ENCODE measurements at regions of chr12 and their contacts with region 1.

Region 1: DNA sequence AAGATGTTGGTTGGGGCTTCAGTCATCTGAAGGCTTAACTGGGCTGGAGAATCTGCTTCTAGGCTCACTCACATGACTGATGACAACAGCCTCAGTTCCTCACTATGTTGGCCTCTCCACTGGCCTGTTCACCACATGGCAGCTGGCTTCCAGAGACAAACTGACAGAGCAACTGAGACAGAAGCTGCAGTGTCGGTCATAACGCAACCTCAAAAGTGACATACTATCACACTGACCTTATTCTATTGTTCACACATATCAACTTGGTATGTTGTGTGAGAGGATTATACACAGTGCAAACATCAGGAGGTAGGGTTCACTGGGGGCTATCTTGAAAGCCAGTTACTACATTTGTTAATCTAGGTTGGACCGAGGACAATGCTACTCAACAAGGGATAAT is 92.9 kb downstream of the PAWR start:
- DNase-seq: no peak
- ATAC-seq: no peak; the same call in 1 of the 2 replicates
- H3K4me3 Mint-ChIP-seq: no peak overlapping the region
- H3K27ac Mint-ChIP-seq: peak overlapping the region; percentile 47
- H3K4me1 Mint-ChIP-seq: peaks cover 31% of the 10 kb centered on the region
- H3K27me3 Mint-ChIP-seq: no peaks in the 10 kb centered on the region
- CTCF ChIP-seq: no peak

Region 2: DNA sequence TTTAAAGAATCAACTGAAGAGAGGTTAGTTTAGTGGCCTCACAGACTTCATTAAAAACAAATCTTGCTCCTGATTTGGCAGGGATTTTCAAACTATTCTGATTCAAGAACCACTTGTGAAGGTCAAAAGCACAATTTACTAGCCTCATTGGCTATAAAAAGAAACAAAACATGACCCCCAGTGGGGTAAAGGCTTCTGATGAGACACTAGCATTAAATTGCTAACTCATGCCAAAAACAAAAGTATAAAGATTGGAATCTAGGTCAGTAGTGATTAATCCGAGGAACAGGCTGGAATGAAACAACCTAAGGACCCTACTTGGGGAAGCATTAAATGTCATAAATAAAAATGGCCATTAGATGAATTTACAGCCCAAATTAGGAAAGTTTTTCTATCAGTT is 219.4 kb before region 1 on chr12:
- CTCF ChIA-PET with region 1: no interaction called
- POLR2A ChIA-PET with region 1: interaction called, 14 read pairs
- DNase-seq: no peak
- ATAC-seq: no peak
- H3K4me3 Mint-ChIP-seq: no peak overlapping the region
- H3K27ac Mint-ChIP-seq: no peak overlapping the region; the same call in 1 of the 2 replicates
- H3K4me1 Mint-ChIP-seq: peaks cover 79% of the 10 kb centered on the region
- H3K27me3 Mint-ChIP-seq: no peaks in the 10 kb centered on the region
- CTCF ChIP-seq: no peak

Region 3: GRCh38 chr12:79638490-79638889 is 40.6 kb after region 1 on chr12:
- CTCF ChIA-PET with region 1: no interaction called
- POLR2A ChIA-PET with region 1: interaction called, 12 read pairs
- DNase-seq: no peak
- ATAC-seq: no peak
- H3K4me3 Mint-ChIP-seq: no peak overlapping the region
- H3K27ac Mint-ChIP-seq: peak overlapping the region; percentile 83; the same call in 1 of the 2 replicates
- H3K4me1 Mint-ChIP-seq: peaks cover 56% of the 10 kb centered on the region
- H3K27me3 Mint-ChIP-seq: no peaks in the 10 kb centered on the region
- CTCF ChIP-seq: no peak

Region 4: DNA sequence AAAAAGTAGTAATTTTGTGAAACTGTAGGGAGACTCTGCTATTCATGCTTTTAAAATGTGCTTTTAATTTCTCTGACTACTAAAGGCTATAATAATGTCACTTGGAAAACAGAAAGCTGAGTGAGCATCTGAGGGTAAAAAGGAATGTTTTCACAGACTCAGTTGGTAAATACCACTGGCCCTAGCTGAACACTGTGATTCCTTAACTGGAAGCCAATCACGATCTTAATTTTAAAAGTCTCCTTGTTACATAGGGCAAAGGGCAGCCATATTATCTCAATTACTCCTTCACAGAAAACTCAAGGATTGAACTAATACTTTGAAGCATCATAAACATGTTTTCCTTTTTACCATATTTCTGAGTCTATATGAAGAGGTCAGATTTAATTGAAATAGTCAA is 51.0 kb after region 1 on chr12:
- CTCF ChIA-PET with region 1: no interaction called
- POLR2A ChIA-PET with region 1: no interaction called
- DNase-seq: no peak
- ATAC-seq: no peak
- H3K4me3 Mint-ChIP-seq: no peak overlapping the region
- H3K27ac Mint-ChIP-seq: peak overlapping the region; percentile 66
- H3K4me1 Mint-ChIP-seq: peaks cover 78% of the 10 kb centered on the region
- H3K27me3 Mint-ChIP-seq: no peaks in the 10 kb centered on the region
- CTCF ChIP-seq: no peak

Region 5: GRCh38 chr12:79659961-79660431 is 62.1 kb after region 1 on chr12:
- CTCF ChIA-PET with region 1: no interaction called
- POLR2A ChIA-PET with region 1: no interaction called
- DNase-seq: no peak
- ATAC-seq: no peak
- H3K4me3 Mint-ChIP-seq: no peak overlapping the region
- H3K27ac Mint-ChIP-seq: peak overlapping the region; percentile 83
- H3K4me1 Mint-ChIP-seq: peaks cover 58% of the 10 kb centered on the region
- H3K27me3 Mint-ChIP-seq: no peaks in the 10 kb centered on the region
- CTCF ChIP-seq: no peak